CD4-positive, alpha-beta T cell (primary cell): ENCODE measurements at regions of chr20 and their contacts with region 1.

Region 1: DNA sequence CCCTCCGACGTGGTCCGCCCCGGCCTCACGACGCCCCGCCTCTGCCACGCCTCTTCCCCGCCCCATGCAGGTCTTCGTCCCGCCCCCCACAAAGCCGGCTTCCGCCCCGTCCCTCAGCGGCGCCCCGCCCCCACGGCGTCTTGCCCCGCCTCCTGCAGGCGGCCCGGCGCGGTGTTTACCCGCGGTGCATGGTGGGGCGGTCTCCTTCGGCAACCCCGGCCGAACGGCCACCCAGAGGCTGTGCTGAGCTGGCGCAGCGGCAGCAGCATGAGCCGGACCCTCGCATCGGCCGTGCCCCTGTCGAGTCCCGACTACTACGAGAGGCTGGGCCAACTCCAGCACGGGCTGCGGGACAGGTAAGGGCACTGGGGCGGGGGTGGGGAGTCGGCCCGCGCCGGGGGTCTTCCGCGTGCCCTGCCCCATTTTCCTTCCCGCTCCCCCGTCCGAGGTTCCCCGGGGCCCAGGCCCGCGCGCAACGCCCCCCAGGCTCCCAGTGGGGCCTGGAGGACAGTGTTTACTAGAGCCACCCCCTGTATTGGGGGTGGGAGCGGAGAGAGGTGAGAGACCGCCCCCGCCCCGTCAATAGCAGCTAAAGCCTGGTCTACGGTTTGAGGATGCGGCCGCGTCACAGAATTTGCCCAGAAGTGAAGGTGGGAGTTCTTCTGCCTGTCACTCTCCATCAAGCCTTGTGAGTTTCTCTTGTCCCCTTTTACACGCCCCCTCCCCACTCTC is at the start of gene KIZ:
- DNase-seq: peak; percentile 91 to 99 (median 97)
- ATAC-seq: peak; percentile 93
- H3K4me3 ChIP-seq: peak within 1 kb of the TSS; percentile 78
- H3K4me3 Mint-ChIP-seq: peak within 1 kb of the TSS; percentile 88
- H3K27ac ChIP-seq: peak within 1 kb of the TSS; percentile 28 to 42
- H3K27ac Mint-ChIP-seq: peak within 1 kb of the TSS; percentile 74
- H3K4me1 ChIP-seq: peaks cover 14% of the 10 kb centered on the region
- H3K4me1 Mint-ChIP-seq: peaks cover 32% of the 10 kb centered on the region
- H3K27me3 ChIP-seq: no peaks in the 10 kb centered on the region
- H3K27me3 Mint-ChIP-seq: peaks cover 4% of the 10 kb centered on the region
- CTCF ChIP-seq: peak; percentile 24
- total RNA-seq, gene KIZ: 31.1 to 33.8 TPM

Region 2: DNA sequence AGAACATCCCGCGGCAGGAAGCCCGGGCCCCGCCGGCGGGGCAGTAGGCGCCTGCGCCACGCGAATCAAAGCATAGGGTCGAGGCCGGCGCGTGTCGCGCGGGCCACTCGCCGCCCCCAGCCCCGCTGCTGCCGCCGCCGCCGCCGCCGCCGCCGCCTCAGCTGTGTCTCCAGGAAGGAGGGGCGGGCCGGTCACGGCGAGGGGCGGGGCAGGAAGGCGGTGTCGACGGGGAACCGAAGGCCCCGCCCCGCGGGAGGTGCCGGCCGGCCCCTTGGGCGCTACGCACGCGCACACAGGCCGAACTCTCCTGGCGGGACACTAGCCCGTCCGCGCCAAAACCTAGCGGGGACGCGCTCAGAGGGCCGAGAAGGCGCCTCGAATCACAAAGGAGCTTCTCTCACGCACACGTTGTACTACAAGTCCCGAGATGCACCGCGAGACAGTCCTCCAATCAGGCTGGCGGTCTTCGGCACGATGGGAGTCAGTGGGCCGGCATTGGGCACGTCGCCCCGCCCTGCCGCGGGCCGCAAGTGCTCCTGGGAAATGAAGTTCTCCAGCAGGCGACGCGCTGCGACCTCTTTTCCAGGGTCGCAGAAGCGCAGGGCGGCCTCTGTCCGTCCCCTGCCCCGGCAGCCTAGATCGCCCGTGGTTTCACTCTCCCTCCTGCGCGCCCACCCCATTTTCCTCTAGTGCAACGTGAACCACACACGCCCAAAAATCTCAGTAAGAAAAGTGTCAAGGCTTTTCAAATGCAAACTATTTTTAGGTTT is 413.4 kb before region 1 on chr20 and contains the start of gene RALGAPA2:
- CTCF ChIA-PET with region 1: no interaction called
- POLR2A ChIA-PET with region 1: interaction called, 5 read pairs
- intact Hi-C with region 1: loop called (anchors 1 to 10 kb)
- DNase-seq: peak; percentile 89 to 97 (median 94)
- ATAC-seq: peak; percentile 93
- H3K4me3 ChIP-seq: peak within 1 kb of the TSS; percentile 82
- H3K4me3 Mint-ChIP-seq: peak within 1 kb of the TSS; percentile 98
- H3K27ac ChIP-seq: peak within 1 kb of the TSS; percentile 79 to 95
- H3K27ac Mint-ChIP-seq: peak within 1 kb of the TSS; percentile 92
- H3K4me1 ChIP-seq: peaks cover 15% of the 10 kb centered on the region
- H3K4me1 Mint-ChIP-seq: peaks cover 40% of the 10 kb centered on the region
- H3K27me3 ChIP-seq: no peaks in the 10 kb centered on the region
- H3K27me3 Mint-ChIP-seq: peaks cover 5% of the 10 kb centered on the region
- CTCF ChIP-seq: no peak
- total RNA-seq, gene RALGAPA2: 21.2 to 21.9 TPM

Region 3: DNA sequence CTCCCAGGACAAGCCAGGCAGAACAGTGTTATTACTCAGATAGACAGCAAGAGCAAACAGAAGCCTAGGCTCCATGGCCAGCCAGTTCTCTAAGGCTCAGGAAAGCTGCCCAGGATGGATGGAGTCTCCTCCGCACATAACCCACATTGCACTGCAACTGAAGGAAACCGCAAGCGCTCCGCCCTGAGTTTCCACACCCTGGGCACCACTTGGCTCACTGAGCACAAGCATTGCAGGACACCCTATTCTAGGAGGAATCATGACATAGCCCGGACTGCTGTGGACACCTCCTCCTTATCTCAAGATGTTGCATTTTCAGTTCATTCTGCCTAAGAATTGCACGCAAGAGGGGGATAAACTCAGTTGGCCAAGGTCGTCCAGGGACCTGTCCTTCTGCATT is 62.7 kb before region 1 on chr20:
- CTCF ChIA-PET with region 1: no interaction called
- POLR2A ChIA-PET with region 1: no interaction called
- intact Hi-C with region 1: no loop called
- DNase-seq: no peak
- ATAC-seq: no peak
- H3K4me3 ChIP-seq: no peak overlapping the region
- H3K4me3 Mint-ChIP-seq: no peak overlapping the region
- H3K27ac ChIP-seq: no peak overlapping the region
- H3K27ac Mint-ChIP-seq: no peak overlapping the region
- H3K4me1 ChIP-seq: no peaks in the 10 kb centered on the region
- H3K4me1 Mint-ChIP-seq: no peaks in the 10 kb centered on the region
- H3K27me3 ChIP-seq: peaks cover 2 to 8% of the 10 kb centered on the region in 2 experiments
- H3K27me3 Mint-ChIP-seq: peaks cover 35% of the 10 kb centered on the region
- CTCF ChIP-seq: no peak

Region 4: GRCh38 chr20:21099751-21100577 is 26.1 kb before region 1 on chr20:
- CTCF ChIA-PET with region 1: interaction called, 7 read pairs
- POLR2A ChIA-PET with region 1: interaction called, 15 read pairs
- intact Hi-C with region 1: loop called (anchors 2 kb)
- DNase-seq: peak in 7 of 14 experiments; percentile 12 to 72 (median 51)
- ATAC-seq: peak; percentile 45
- H3K4me3 ChIP-seq: peak overlapping the region; percentile 68
- H3K4me3 Mint-ChIP-seq: peak overlapping the region; percentile 84
- H3K27ac ChIP-seq: peak overlapping the region in 1 of 2 donors; percentile 7
- H3K27ac Mint-ChIP-seq: peak overlapping the region; percentile 35
- H3K4me1 ChIP-seq: peaks cover 53% of the 10 kb centered on the region
- H3K4me1 Mint-ChIP-seq: peaks cover 52% of the 10 kb centered on the region
- H3K27me3 ChIP-seq: peaks cover 79 to 93% of the 10 kb centered on the region in 2 experiments
- H3K27me3 Mint-ChIP-seq: peaks cover 94% of the 10 kb centered on the region
- CTCF ChIP-seq: no peak

Region 5: DNA sequence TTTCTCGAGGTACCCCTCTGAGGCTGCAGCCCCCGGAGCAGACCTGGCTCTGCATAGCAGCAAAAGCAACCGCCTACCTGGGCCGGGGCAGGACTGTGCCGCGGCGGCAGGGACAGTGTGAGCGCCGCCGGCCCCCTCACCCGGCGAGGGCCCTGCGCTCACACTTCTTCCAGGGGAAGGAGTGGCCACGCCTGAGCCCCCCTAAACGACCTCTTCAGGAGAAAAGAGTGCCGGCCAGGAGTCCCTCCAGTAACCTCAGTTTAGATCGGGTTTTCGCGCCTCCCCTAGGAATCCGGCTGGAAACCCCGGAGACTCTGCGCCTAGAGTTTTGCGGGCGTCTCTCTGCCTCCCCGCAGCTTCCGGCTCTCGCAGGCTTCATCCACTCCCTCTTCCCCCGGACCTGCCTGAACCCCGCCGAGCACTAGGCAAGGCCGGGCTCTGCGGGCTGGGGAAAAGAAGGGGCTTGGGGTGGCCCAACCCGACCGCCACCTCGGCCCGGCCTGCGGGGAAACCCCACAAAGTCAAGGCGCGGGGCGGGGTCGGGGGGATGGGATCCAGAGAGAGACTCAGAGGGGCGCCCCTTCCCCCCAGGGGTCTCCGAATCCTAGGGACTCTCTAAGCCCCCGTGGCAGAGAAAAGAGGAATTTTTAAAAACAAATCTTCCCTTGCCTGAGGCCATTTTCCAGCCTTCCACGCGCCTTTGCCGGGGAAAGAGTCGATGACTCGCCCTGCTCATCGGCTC is 20.4 kb before region 1 on chr20:
- CTCF ChIA-PET with region 1: interaction called, 7 read pairs
- POLR2A ChIA-PET with region 1: interaction called, 15 read pairs
- intact Hi-C with region 1: loop called (anchors 1 to 2 kb)
- DNase-seq: peak in 3 of 14 experiments; percentile 2 to 38 (median 24)
- ATAC-seq: no peak
- H3K4me3 ChIP-seq: no peak overlapping the region
- H3K4me3 Mint-ChIP-seq: no peak overlapping the region
- H3K27ac ChIP-seq: no peak overlapping the region
- H3K27ac Mint-ChIP-seq: no peak overlapping the region
- H3K4me1 ChIP-seq: peaks cover 50% of the 10 kb centered on the region
- H3K4me1 Mint-ChIP-seq: peaks cover 34% of the 10 kb centered on the region
- H3K27me3 ChIP-seq: peaks cover 74 to 86% of the 10 kb centered on the region in 2 experiments
- H3K27me3 Mint-ChIP-seq: peaks cover 92% of the 10 kb centered on the region
- CTCF ChIP-seq: no peak